B cell (primary cell): ENCODE measurements at regions of chr1 and their contacts with region 1.

Region 1: DNA sequence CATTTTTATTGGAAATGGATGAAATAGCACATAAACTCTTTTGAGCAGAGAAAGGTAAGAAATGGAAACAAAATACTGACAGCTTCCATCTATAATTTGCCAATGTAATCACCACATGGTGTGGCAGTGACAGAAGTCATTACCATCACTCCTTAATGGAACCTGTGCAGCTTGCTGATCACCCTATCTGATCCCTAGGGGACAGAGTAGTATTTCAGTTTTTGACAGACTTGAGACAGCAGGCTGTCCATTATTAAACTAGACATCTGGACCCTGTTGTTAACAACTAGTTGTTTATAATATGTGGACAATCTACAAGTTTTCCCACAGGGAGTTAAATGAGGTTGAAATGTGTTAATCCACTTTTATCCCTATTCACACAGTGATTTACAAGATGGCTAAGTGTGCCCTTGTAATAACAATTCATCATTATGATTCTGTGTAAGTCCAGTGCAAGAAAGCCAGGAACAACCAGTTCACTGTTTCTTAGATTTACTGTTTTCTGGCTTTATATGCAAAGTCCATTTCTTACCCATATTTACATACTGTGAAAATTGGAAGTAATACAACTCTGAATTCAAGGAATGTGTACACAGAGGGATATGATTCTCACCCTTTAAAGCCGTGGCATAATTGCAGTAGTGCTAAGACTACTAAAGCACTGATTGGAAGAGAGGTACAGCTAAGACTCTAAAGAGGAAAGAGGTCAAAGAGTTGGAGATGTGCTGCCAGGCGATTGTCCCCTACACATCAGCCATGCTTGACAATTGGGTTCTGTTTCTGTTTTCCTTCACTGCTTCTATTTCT is 9.1 kb downstream of the KCNT2 start:
- DNase-seq: no peak
- ATAC-seq: no peak
- H3K4me3 ChIP-seq: no peak overlapping the region
- H3K4me3 Mint-ChIP-seq: no peak overlapping the region
- H3K27ac ChIP-seq: no peak overlapping the region
- H3K27ac Mint-ChIP-seq: no peak overlapping the region
- H3K4me1 ChIP-seq: no peaks in the 10 kb centered on the region
- H3K4me1 Mint-ChIP-seq: no peaks in the 10 kb centered on the region
- H3K27me3 ChIP-seq: no peaks in the 10 kb centered on the region
- H3K27me3 Mint-ChIP-seq: no peaks in the 10 kb centered on the region
- CTCF ChIP-seq: no peak

Region 2: DNA sequence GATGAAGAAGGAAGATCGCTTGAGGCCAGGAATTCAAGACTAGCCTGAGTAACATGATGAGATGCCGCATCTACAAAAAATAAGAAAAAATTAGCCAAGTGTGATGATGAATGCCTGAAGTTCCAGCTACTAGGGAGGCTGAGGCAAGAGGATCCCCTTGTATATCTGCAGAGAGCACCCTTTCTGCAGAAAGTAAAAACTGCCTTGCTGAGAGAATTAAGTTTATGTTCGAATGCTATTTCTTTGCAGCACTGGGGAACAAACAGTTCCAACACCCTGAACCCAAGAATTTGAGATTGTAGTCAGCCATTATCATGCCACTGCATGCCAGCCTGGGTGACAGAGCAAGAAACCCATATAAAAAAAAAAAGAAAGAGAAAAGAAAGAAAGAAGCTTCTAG is 29.7 kb after region 1 on chr1:
- CTCF ChIA-PET with region 1: no interaction called
- POLR2A ChIA-PET with region 1: interaction called, 12 read pairs
- intact Hi-C with region 1: no loop called
- DNase-seq: no peak
- ATAC-seq: no peak
- H3K4me3 ChIP-seq: no peak overlapping the region
- H3K4me3 Mint-ChIP-seq: no peak overlapping the region
- H3K27ac ChIP-seq: no peak overlapping the region
- H3K27ac Mint-ChIP-seq: no peak overlapping the region
- H3K4me1 ChIP-seq: no peaks in the 10 kb centered on the region
- H3K4me1 Mint-ChIP-seq: no peaks in the 10 kb centered on the region
- H3K27me3 ChIP-seq: no peaks in the 10 kb centered on the region
- H3K27me3 Mint-ChIP-seq: no peaks in the 10 kb centered on the region
- CTCF ChIP-seq: no peak

Region 3: DNA sequence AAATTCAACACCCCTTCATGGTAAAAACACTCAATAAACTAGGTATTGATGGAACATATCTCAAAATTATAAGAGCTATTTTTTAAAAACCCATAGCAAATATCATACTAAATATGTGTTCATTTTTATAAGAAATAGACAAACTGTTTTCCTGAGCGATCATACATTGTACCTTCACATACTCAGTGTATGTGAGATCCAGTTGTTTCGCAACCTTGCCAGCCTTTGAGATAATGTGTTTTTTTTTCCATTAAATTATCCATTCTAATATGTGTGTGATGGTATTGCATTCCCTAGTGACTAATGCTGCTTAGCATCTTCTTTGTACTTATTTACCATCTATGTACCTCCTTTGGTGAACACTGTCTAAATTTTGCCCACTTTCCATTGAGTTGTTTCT is 99.8 kb after region 1 on chr1:
- CTCF ChIA-PET with region 1: no interaction called
- POLR2A ChIA-PET with region 1: no interaction called
- intact Hi-C with region 1: no loop called
- DNase-seq: no peak
- ATAC-seq: no peak
- H3K4me3 ChIP-seq: no peak overlapping the region
- H3K4me3 Mint-ChIP-seq: no peak overlapping the region
- H3K27ac ChIP-seq: no peak overlapping the region
- H3K27ac Mint-ChIP-seq: no peak overlapping the region
- H3K4me1 ChIP-seq: no peaks in the 10 kb centered on the region
- H3K4me1 Mint-ChIP-seq: no peaks in the 10 kb centered on the region
- H3K27me3 ChIP-seq: no peaks in the 10 kb centered on the region
- H3K27me3 Mint-ChIP-seq: no peaks in the 10 kb centered on the region
- CTCF ChIP-seq: no peak